ENCODE measurements at regions of chr12 and their contacts with region 1.

Region 1: GRCh38 chr12:75825686-75826085 is 205.9 kb downstream of the PHLDA1 start:
- DNase-seq: peak; percentile 96
- ATAC-seq: peak; percentile 92
- H3K4me3 ChIP-seq: no peak overlapping the region; the same call in 1 of the 2 replicates
- H3K27ac ChIP-seq: peak overlapping the region; percentile 97
- H3K4me1 ChIP-seq: peaks cover 37% of the 10 kb centered on the region
- H3K27me3 ChIP-seq: no peaks in the 10 kb centered on the region
- CTCF ChIP-seq: no peak

Region 2: GRCh38 chr12:75862692-75863471 is 37.2 kb after region 1 on chr12:
- CTCF ChIA-PET with region 1: no interaction called
- POLR2A ChIA-PET with region 1: interaction called, 4 read pairs
- intact Hi-C with region 1: loop called (anchors 1 kb)
- DNase-seq: peak; percentile 97
- ATAC-seq: peak; percentile 77
- H3K4me3 ChIP-seq: peak overlapping the region; percentile 36; the same call in 1 of the 2 replicates
- H3K27ac ChIP-seq: peak overlapping the region; percentile 98
- H3K4me1 ChIP-seq: peaks cover 57% of the 10 kb centered on the region
- H3K27me3 ChIP-seq: no peaks in the 10 kb centered on the region
- CTCF ChIP-seq: no peak

Region 3: DNA sequence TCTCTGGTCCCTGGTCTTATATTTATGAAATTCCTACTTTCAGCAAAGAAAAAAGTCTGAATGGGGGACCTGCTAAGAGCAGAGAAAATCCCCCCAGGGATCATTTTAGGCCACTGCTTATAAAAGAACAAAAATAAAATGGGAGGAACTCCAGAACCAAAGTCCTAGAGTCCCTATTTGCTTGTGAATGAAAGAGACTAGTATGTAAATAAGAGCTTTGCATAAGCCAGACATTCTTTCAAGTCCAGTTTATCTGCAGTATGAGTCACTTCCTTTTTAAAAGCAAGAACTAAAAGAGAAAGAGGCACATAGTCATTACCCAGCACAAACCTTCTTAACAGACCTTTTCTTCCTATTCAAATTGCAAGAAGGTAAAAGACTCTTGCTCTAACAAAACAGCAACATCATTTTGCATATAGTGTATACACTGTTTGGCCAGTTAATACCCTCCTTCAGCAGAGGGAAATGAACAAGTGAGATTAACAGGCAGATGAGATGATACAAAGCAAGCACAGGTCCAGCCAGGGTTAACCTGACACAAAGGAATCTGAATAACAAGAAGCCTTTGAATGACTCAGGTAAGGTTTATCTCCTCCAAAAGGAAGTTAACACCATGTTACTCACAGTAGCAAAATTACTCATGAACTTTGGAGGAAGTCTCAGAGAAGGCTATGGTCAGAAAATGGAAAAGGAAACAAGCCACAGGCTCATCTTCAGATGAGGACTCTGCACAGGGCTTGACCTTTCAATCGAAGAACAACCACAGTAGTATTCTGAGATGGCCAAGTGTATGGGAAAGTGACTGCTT is 118.6 kb after region 1 on chr12:
- CTCF ChIA-PET with region 1: no interaction called
- POLR2A ChIA-PET with region 1: no interaction called
- intact Hi-C with region 1: loop called (anchors 2 kb)
- DNase-seq: peak; percentile 96
- ATAC-seq: peak; percentile 86
- H3K4me3 ChIP-seq: peak overlapping the region; percentile 23; the same call in 1 of the 2 replicates
- H3K27ac ChIP-seq: peak overlapping the region; percentile 98
- H3K4me1 ChIP-seq: peaks cover 23% of the 10 kb centered on the region
- H3K27me3 ChIP-seq: no peaks in the 10 kb centered on the region
- CTCF ChIP-seq: no peak

Measured in PC-3 (cell line).